ENCODE measurements at regions of chr14 and their contacts with region 1.

Region 1: GRCh38 chr14:49620182-49621113 is at the starts of genes MGAT2 and RPL36AL:
- DNase-seq: peak; percentile 96 to 100 (median 99)

Region 2: DNA sequence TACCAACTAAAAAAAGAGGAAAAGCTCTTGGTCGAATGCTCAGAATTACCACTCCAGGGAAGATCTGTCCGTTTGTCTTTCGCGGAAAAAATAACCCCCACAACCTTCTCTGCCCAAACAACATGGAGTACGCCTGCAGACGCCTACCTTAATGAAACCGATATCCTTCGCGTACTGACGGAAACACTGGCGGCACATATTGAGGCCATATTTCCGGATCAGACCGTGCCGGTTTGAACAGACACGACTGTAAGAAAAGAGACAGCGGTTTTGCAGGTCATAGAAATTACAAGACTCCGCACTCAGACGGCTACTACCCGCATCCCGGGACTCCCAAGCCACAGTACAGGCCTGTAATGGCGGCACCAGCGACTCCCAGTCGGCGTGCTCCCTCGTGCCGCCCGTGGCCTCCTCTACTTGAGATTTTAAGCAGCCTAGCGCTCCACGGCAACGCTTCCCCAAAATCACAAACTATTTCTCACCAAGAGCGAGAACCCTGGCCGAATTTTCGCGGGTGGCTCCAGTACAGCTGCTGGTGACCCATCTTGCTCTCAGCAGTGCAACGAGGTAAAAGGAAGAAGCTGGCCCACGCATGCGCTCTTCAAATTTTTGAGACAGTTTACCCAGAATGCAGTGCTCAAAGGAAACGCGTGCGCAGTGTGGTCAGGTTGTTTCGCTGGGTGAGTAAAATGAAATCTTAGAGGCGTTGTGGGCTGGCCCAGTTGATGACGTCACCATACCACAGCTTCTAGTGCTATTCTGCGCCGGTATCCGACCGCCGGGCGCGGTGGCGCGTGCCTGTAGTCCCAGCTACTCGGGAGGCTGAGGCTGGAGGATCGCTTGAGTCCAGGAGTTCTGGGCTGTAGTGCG is 34.4 kb before region 1 on chr14 and contains the start of gene RPS29:
- intact Hi-C with region 1: loop called (anchors 2 kb)
- DNase-seq: peak; percentile 88 to 99 (median 94)

Region 3: DNA sequence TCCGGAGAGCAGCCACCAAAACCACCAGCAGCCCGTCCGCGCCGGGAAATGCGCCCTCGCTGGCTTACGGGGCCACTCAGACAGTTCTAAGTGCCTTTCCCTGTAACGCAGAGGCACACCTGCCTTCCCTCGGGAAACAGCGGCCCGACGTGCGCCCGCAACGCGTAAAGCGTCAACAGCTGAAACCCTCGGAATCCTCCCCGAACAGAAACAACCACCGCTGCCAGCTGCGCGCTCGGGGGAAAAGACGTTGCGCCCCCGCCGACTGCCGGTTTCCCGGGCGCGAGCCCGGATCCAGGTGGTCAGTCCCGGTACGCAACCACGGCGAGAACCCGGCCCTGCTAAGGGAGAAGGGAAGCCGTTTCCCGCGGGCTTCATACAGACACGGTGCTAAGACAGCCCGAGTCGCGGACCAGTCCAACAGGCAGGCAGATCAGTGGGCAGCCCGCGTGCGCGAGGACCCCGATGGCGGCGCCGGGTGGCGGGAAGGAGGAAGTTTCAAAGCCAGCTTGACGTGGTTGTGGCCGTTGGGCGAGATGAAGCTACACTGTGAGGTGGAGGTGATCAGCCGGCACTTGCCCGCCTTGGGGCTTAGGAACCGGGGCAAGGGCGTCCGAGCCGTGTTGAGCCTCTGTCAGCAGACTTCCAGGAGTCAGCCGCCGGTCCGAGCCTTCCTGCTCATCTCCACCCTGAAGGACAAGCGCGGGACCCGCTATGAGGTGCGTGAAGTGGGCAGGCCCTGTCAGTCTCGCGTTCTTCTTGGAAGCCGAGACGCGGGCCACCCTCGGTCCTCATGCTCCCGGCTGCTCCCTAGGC is 21.8 kb before region 1 on chr14 and contains the start of gene LRR1:
- intact Hi-C with region 1: loop called (anchors 2 kb)
- DNase-seq: peak; percentile 76 to 97 (median 84)

Region 4: DNA sequence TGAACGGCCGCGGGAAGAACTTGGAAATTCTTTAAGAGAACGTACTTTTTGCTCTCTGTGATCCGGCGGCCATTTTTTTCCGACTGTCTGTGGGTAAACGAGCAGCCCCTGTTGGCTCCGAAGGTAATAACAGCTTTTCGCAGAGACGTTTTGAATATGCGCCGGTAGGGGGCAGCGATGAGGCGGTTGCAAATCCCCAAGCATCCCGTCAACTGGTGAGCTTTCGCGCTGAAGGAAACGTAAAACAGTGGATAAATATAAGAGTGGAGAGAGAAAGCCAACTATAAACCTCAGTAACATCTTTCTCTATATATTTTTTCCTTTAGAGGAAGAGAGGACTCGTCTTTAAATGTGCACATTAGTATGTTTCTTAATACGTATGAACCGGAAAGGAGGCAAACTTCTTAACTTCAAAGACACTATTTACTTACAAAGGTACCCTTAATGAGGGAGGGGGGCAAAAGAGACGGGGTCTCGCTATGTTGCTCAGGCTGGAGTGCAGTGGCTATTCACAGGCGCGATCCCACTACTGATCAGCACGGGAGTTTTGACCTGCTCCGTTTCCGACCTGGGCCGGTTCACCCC is 241.7 kb after region 1 on chr14:
- intact Hi-C with region 1: loop called (anchors 5 kb)
- DNase-seq: peak; percentile 63 to 96 (median 78)